ENCODE measurements at regions of chr18 and their contacts with region 1.

Region 1: GRCh38 chr18:61581578-61582201 is 248.5 kb downstream of the CDH20 start:
- DNase-seq: peak; percentile 65 to 88 (median 80)
- H3K4me3 ChIP-seq: peak overlapping the region; percentile 42
- H3K27ac ChIP-seq: peak overlapping the region; percentile 5 to 57
- H3K4me1 ChIP-seq: peaks cover 2% of the 10 kb centered on the region
- H3K27me3 ChIP-seq: no peaks in the 10 kb centered on the region
- CTCF ChIP-seq: peak; percentile 81 to 99 (median 91)
- EP300 ChIP-seq: no peak
- POLR2A ChIP-seq: no peak

Region 2: DNA sequence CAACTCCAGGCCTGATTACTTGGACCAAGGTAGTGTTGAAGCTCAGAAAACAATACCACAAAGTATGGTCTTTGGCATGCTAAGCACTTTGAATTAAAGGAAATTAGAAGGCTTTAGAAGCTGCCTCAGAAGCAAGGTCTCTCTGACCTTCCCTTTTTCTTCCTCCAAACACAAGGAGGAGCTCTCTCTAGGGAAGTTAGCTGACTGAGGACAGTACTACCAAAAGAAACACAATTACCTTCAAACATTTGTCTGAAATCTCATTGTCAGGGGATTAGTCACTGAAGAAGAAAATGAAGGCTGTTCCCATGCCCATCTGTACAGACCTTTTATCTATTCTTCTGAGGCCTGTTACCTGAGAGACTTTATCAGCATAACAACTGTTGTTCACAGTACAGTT is 30.8 kb after region 1 on chr18:
- intact Hi-C with region 1: no loop called
- DNase-seq: no peak
- H3K4me3 ChIP-seq: no peak overlapping the region
- H3K27ac ChIP-seq: no peak overlapping the region
- H3K4me1 ChIP-seq: no peaks in the 10 kb centered on the region
- H3K27me3 ChIP-seq: no peaks in the 10 kb centered on the region
- CTCF ChIP-seq: no peak
- EP300 ChIP-seq: no peak
- POLR2A ChIP-seq: no peak

Region 3: GRCh38 chr18:62037989-62038778 is 456.5 kb after region 1 on chr18:
- intact Hi-C with region 1: loop called in 1 of 4 experiments (anchors 5 kb)
- DNase-seq: no peak
- H3K4me3 ChIP-seq: no peak overlapping the region
- H3K27ac ChIP-seq: no peak overlapping the region
- H3K4me1 ChIP-seq: peaks cover 4% of the 10 kb centered on the region
- H3K27me3 ChIP-seq: no peaks in the 10 kb centered on the region
- CTCF ChIP-seq: peak in 1 of 3 donors; percentile 12
- EP300 ChIP-seq: no peak
- POLR2A ChIP-seq: no peak

Measured in ovary (tissue), 10 donors.